Ascending aorta (tissue), 2 donors: ENCODE measurements at regions of chr1 and their contacts with region 1.

Region 1: DNA sequence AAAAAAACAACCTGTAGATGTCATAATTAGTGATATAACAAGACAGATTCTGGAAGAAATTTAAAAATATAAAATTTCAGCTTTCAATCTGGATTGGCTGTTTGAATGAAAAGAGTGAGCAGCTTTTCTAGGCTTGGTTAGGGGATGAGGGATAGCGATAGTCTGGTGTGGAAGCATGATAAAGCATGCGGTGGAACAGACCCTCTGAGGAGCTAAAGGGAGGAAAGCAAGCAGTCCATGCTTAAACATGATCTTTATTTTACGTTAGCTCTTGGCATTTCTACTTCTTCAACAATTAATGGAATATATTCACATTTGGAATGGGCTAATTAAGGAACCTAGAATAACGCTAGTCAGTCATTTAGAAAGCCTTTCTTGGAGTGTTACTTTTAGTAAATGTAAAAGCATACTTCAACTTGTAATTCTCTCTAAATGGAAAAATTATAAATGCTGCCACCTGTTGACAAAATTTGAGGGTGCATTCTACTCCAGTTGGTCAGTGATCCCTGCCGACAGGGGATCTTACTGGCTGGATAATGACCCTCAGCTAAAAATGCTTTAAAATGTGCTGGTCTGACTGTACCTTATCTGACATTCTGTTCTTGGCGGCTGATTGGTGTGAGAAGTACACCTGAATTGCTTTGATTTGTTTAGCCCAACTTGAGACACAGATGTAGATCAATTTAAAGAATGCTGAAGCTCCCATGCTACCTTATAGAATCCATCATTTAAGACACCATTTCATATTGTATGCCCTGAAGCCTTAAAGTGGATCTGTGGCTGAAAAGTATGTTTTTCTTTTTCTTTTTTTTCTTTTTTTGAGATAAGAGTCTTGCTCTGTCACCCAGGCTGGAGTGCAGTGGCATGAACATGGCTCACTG is 61.2 kb downstream of the AK4 start:
- DNase-seq: no peak
- H3K4me3 ChIP-seq: no peak overlapping the region
- H3K27ac ChIP-seq: no peak overlapping the region
- H3K4me1 ChIP-seq: peaks cover 0 to 3% of the 10 kb centered on the region in 2 donors
- H3K27me3 ChIP-seq: no peaks in the 10 kb centered on the region
- CTCF ChIP-seq: peak; percentile 64 to 74 (median 71)

Region 2: DNA sequence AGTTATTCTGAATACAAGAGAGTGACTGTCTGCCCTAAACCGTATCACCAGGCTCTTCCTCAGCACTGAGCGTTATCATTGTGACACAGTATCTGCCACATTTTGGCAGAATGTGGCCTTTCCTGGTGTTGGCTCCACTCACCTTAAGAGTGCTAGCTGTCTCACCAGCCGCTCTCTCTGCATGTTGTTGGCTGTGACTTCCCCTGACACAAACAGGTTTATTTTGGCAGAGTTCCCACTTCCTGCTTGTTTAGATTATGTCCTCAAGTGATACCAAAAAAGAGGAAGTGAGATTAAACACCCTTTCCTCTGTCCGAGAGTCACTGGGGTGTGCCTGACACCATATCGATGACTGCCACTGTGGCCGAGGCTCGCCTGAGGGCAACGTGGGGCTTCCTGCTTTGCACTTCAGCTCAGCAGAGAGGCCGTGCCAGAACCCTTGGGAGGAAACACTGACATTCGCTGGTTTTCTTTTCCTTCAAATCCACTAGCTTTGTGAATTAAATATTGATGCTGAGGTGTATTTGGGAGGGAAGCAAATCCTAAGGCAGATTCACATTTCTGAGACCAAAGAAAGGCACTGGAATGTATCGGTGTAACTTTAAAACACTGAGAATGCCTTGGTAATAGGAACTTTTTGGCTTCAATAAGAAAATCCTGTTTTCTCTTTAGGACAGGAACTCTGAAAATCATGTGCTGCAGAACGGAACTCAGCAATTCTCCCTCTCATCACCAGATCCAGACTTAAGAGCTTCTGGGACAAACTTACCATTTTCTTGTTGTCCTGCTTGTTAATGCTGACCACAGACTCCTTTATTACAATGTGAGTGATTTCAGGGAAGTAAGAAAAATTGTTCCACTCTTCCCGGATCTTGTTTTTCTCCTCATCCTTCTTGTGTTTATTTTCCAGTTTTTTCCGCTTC is 345.0 kb before region 1 on chr1:
- intact Hi-C with region 1: loop called (anchors 10 kb)
- DNase-seq: peak; percentile 22 to 74
- H3K4me3 ChIP-seq: no peak overlapping the region
- H3K27ac ChIP-seq: peak overlapping the region in 1 of 2 donors; percentile 5
- H3K4me1 ChIP-seq: no peaks in the 10 kb centered on the region
- H3K27me3 ChIP-seq: peaks cover 4% of the 10 kb centered on the region
- CTCF ChIP-seq: no peak

Region 3: GRCh38 chr1:65059930-65060538 is 149.2 kb before region 1 on chr1:
- intact Hi-C with region 1: loop called (anchors 1 kb)
- DNase-seq: no peak
- H3K4me3 ChIP-seq: no peak overlapping the region
- H3K27ac ChIP-seq: peak overlapping the region; percentile 10 to 35
- H3K4me1 ChIP-seq: peaks cover 3 to 22% of the 10 kb centered on the region in 2 donors
- H3K27me3 ChIP-seq: no peaks in the 10 kb centered on the region
- CTCF ChIP-seq: peak; percentile 64 to 70 (median 67)

Region 4: GRCh38 chr1:65148548-65149350 is 60.5 kb before region 1 on chr1:
- intact Hi-C with region 1: loop called (anchors 2 kb)
- DNase-seq: peak in 1 of 2 donors; percentile 71
- H3K4me3 ChIP-seq: peak overlapping the region; percentile 81 to 89
- H3K27ac ChIP-seq: peak overlapping the region; percentile 92 to 93
- H3K4me1 ChIP-seq: peaks cover 0 to 3% of the 10 kb centered on the region in 2 donors
- H3K27me3 ChIP-seq: no peaks in the 10 kb centered on the region
- CTCF ChIP-seq: no peak

Region 5: DNA sequence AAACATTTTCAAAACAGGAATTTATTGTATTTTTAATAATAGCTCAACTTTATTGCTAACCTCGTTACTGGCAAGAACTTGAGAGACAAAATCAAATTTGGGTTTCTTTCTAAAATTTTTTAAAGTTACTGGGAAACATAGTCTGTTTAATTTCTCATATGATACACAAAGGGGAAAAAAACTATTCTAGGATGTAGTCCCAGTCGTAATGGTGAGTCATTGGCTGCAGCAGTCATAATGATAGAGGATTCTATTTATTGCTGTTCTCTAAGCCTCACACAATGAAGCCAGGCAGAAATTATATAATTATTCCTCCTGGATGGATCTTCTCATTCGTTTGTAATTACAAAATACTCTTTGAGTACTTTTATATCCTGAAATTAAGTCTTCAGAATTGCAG is 998.2 kb after region 1 on chr1:
- intact Hi-C with region 1: no loop called
- DNase-seq: no peak
- H3K4me3 ChIP-seq: no peak overlapping the region
- H3K27ac ChIP-seq: no peak overlapping the region
- H3K4me1 ChIP-seq: no peaks in the 10 kb centered on the region
- H3K27me3 ChIP-seq: no peaks in the 10 kb centered on the region
- CTCF ChIP-seq: no peak